Psoas muscle (tissue), 8 donors: ENCODE measurements at regions of chr1 and their contacts with region 1.

Region 1: DNA sequence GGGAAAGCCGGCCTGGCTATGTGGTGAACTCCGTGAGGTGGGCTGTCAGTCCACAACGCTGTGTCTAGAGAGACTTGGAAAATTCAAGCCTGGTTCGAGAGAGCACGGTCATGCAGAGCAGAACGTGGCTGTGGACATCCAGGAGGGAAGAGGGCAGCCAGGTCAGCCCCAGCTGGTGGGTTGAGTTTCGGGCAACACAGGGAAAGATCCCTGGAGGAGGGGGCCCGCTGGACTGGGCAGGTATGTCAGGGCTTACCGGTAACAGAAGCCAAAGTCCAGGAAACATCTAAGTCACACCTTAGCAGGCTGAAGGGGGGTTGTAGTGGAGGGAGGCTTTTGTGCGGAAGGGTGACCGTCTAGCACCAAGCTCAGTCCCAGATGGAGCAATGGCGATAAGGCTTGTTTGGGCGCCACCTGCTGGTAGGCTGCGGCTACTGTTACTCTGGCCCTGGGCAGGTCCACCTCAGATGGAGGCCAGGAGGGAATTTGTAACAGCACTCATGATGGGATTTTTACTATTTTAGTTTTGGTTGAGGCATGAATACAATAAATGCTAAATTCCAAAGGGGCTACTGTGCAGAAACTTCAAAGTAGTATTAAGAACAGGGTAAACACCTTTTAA is 143.3 kb upstream of the ZNF644 start:
- DNase-seq: peak; percentile 61 to 85
- ATAC-seq: peak; percentile 76 to 94 (median 86)
- H3K4me3 ChIP-seq: no peak overlapping the region
- H3K27ac ChIP-seq: no peak overlapping the region
- H3K4me1 ChIP-seq: no peaks in the 10 kb centered on the region
- H3K27me3 ChIP-seq: no peaks in the 10 kb centered on the region
- CTCF ChIP-seq: peak; percentile 85

Region 2: GRCh38 chr1:90579212-90579802 is 585.8 kb before region 1 on chr1:
- intact Hi-C with region 1: loop called (anchors 5 kb)
- DNase-seq: no peak
- ATAC-seq: peak in 2 of 4 donors; percentile 48 to 76
- H3K4me3 ChIP-seq: no peak overlapping the region
- H3K27ac ChIP-seq: no peak overlapping the region
- H3K4me1 ChIP-seq: no peaks in the 10 kb centered on the region
- H3K27me3 ChIP-seq: peaks cover 0 to 10% (median 0%) of the 10 kb centered on the region in 3 donors
- CTCF ChIP-seq: peak; percentile 63

Region 3: DNA sequence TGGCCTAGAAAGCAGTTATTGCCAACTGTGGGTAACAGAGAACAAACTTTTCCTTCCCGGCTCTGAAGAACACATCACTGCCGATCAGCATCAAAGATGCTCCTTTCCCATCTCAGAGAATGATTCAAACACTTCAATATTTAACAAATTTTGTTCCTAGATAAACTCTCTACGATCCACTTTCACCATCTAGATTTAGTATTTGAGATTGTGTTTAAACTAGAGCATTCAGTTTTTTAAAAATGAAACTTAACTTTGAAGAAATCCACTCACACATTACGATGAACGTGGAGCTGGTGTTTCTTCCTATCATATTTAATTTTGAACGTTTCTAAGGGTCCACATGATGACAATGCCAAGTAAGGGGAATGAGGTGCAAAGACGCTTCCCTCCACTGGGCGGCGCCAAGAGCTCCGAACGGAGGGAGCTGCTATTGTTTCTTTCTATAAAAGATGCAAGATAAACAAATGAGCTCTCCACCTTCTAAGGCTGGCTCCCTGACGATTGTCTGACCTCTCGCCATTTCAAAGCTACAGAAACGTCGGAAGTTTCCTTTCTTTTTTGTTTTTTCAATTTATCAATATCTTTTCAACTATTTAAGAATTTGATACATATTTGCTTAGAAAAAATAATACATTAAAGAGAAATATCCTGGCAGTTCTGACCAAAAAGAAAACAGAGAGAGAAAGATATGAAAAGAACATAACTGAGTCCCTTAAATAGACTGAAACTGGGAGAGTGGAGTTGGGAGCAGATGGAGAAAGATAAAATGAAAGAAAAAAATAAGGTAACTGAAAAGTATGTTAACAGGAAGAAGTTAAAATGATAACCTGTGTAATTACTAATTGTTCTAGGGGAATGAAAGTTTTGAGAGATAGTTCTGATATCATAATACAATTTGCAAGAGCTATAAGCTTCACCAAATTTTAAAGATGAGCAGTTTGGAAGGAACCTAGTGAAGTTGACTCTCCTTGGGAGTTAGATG is 443.6 kb before region 1 on chr1:
- intact Hi-C with region 1: loop called in 1 of 2 experiments (anchors 10 kb)
- DNase-seq: no peak
- ATAC-seq: no peak
- H3K4me3 ChIP-seq: no peak overlapping the region
- H3K27ac ChIP-seq: no peak overlapping the region
- H3K4me1 ChIP-seq: peaks cover 29% of the 10 kb centered on the region
- H3K27me3 ChIP-seq: peaks cover 2 to 97% (median 81%) of the 10 kb centered on the region in 3 donors
- CTCF ChIP-seq: peak; percentile 68

Region 4: DNA sequence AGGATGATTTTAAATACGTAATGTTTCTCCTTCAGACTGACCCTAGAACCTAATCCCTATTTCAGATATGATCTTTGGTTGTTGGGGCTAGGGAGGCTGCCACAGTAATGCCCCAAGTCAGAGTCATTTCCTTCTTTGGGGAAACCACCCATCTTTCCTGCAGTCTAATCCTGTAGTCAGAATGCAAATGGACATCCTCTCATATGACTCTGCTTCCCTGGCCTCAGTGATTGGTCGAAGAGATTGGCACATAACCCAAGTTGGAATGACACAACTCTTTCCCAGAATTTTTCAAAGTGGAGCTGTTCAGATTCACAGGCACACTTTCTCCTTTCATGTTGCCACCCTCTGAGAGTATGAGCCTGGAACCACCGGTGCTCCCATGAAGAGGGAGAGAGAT is 84.5 kb before region 1 on chr1:
- intact Hi-C with region 1: no loop called
- DNase-seq: no peak
- ATAC-seq: no peak
- H3K4me3 ChIP-seq: no peak overlapping the region
- H3K27ac ChIP-seq: no peak overlapping the region
- H3K4me1 ChIP-seq: no peaks in the 10 kb centered on the region
- H3K27me3 ChIP-seq: no peaks in the 10 kb centered on the region
- CTCF ChIP-seq: no peak

Region 5: GRCh38 chr1:91124989-91125417 is 40.1 kb before region 1 on chr1:
- intact Hi-C with region 1: no loop called
- DNase-seq: no peak
- ATAC-seq: no peak
- H3K4me3 ChIP-seq: no peak overlapping the region
- H3K27ac ChIP-seq: no peak overlapping the region
- H3K4me1 ChIP-seq: no peaks in the 10 kb centered on the region
- H3K27me3 ChIP-seq: no peaks in the 10 kb centered on the region
- CTCF ChIP-seq: no peak